ENCODE measurements at regions of chr6 and their contacts with region 1.

Region 1: DNA sequence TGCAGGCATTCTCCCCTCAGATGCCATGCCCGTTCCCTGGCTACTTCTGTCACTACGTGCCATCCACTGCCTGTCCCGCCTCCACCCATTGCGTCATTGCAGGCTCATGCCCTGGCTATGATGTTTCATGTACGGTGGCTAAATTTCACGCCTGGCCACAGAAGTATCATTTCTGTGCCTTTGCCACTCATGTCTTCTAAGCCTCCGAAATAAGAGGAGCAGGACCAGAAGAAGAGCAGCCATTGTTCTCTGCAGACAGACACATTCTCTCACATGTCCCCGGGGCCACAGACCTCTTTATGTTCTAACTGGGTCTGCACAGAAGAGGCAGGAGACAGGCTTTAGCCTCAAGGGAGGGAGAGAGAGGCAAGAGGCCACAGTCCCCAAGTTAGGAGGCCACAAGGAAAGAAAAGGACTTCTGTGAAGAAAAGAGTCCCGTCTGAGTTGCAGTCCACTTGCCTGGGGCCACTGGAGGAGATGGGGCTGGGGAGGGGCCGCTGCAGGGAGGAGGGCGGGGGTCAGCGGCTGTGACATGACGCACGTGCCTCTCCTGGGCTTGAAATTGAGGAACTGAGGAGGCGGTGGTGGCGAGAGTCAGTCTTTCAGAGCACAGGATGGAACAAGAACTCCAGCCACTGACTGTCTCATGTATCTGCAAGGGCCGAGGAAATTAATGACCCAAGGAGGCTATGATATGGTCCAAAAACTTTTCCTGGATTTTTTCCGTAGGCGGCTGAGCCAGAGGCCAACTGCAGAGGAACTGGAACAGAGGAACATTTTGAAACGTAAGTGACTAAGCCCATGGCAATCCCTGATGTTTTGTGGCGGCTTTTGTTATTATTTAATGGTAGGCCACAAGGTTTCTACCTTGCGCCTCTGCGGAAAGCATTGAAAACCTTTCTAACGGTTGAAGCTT is 55.9 kb downstream of the TBC1D7 start:
- DNase-seq: peak; percentile 91
- ATAC-seq: peak; percentile 76
- H3K4me3 ChIP-seq: peak overlapping the region; percentile 75 to 99 (median 96)
- H3K4me3 Mint-ChIP-seq: peak overlapping the region; percentile 94
- H3K27ac ChIP-seq: peak overlapping the region; percentile 94 to 96
- H3K27ac Mint-ChIP-seq: peak overlapping the region; percentile 93
- H3K4me1 ChIP-seq: peaks cover 59 to 71% of the 10 kb centered on the region in 2 donors
- H3K4me1 Mint-ChIP-seq: peaks cover 72% of the 10 kb centered on the region
- H3K27me3 ChIP-seq: no peaks in the 10 kb centered on the region
- H3K27me3 Mint-ChIP-seq: no peaks in the 10 kb centered on the region
- CTCF ChIP-seq: no peak

Region 2: GRCh38 chr6:13101409-13101808 is 171.0 kb before region 1 on chr6:
- CTCF ChIA-PET with region 1: no interaction called
- POLR2A ChIA-PET with region 1: no interaction called
- intact Hi-C with region 1: no loop called
- DNase-seq: no peak
- ATAC-seq: no peak
- H3K4me3 ChIP-seq: no peak overlapping the region
- H3K4me3 Mint-ChIP-seq: no peak overlapping the region
- H3K27ac ChIP-seq: no peak overlapping the region
- H3K27ac Mint-ChIP-seq: no peak overlapping the region
- H3K4me1 ChIP-seq: peaks cover 10 to 15% of the 10 kb centered on the region in 2 donors
- H3K4me1 Mint-ChIP-seq: no peaks in the 10 kb centered on the region
- H3K27me3 ChIP-seq: peaks cover 0 to 4% (median 0%) of the 10 kb centered on the region in 4 experiments
- H3K27me3 Mint-ChIP-seq: peaks cover 15% of the 10 kb centered on the region
- CTCF ChIP-seq: no peak

Region 3: DNA sequence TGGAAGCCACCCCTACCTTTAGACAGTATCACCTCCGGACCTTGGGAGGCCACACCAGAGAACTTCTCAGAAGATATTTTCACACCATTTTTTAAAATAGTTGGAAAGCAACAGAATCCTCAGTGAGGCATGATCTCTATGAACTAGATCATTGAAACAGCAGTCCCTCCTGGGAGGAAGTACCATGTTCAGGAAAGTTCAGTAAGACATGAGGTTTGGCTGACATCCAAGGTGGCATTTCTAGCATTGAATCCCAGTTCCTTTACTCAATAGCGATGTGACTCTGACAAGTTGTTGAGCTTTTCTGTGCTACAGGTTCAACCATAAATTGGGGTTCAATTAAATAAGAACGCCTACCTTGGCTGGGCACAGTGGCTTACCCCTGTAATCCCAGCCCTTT is 113.1 kb before region 1 on chr6:
- CTCF ChIA-PET with region 1: no interaction called
- POLR2A ChIA-PET with region 1: no interaction called
- intact Hi-C with region 1: no loop called
- DNase-seq: no peak
- ATAC-seq: no peak
- H3K4me3 ChIP-seq: no peak overlapping the region
- H3K4me3 Mint-ChIP-seq: no peak overlapping the region
- H3K27ac ChIP-seq: no peak overlapping the region
- H3K27ac Mint-ChIP-seq: no peak overlapping the region
- H3K4me1 ChIP-seq: peaks cover 0 to 3% of the 10 kb centered on the region in 2 donors
- H3K4me1 Mint-ChIP-seq: peaks cover 2% of the 10 kb centered on the region
- H3K27me3 ChIP-seq: peaks cover 0 to 5% (median 1%) of the 10 kb centered on the region in 4 experiments
- H3K27me3 Mint-ChIP-seq: peaks cover 19% of the 10 kb centered on the region
- CTCF ChIP-seq: no peak

Region 4: DNA sequence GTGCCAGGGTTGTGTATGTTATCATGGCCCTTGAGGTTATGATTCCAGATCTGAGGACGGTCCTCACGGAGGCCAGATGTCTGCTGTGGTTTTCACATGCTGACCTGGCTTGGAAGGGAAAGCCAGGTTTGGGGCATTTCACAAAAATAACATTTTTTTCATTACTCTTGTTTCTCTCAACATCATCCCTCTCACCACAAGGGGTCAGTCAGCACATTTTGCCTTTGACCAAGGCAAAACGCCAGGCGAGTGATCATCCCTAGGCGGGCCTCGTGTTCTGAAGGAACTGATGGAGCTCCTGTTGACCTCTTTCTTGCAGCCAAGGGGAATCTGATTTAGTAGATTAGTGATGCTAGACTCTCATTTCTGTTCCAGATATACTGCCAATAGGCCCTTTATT is 77.5 kb before region 1 on chr6:
- CTCF ChIA-PET with region 1: interaction called, 152 read pairs
- POLR2A ChIA-PET with region 1: interaction called, 8 read pairs
- intact Hi-C with region 1: loop called (anchors 1 kb)
- DNase-seq: peak; percentile 80
- ATAC-seq: peak; percentile 70
- H3K4me3 ChIP-seq: no peak overlapping the region
- H3K4me3 Mint-ChIP-seq: no peak overlapping the region
- H3K27ac ChIP-seq: no peak overlapping the region
- H3K27ac Mint-ChIP-seq: peak overlapping the region; percentile 70
- H3K4me1 ChIP-seq: peaks cover 7 to 14% of the 10 kb centered on the region in 2 donors
- H3K4me1 Mint-ChIP-seq: peaks cover 13% of the 10 kb centered on the region
- H3K27me3 ChIP-seq: no peaks in the 10 kb centered on the region
- H3K27me3 Mint-ChIP-seq: peaks cover 13% of the 10 kb centered on the region
- CTCF ChIP-seq: peak; percentile 73

Region 5: GRCh38 chr6:13261464-13261994 is 10.9 kb before region 1 on chr6:
- CTCF ChIA-PET with region 1: interaction called, 15 read pairs
- POLR2A ChIA-PET with region 1: interaction called, 6 read pairs
- intact Hi-C with region 1: loop called (anchors 1 kb)
- DNase-seq: peak; percentile 91
- ATAC-seq: peak; percentile 76
- H3K4me3 ChIP-seq: peak overlapping the region; percentile 25 to 55 (median 36)
- H3K4me3 Mint-ChIP-seq: peak overlapping the region; percentile 75
- H3K27ac ChIP-seq: peak overlapping the region; percentile 93
- H3K27ac Mint-ChIP-seq: peak overlapping the region; percentile 86
- H3K4me1 ChIP-seq: peaks cover 73 to 87% of the 10 kb centered on the region in 2 donors
- H3K4me1 Mint-ChIP-seq: peaks cover 89% of the 10 kb centered on the region
- H3K27me3 ChIP-seq: no peaks in the 10 kb centered on the region
- H3K27me3 Mint-ChIP-seq: no peaks in the 10 kb centered on the region
- CTCF ChIP-seq: no peak

Region 6: GRCh38 chr6:13296536-13296997 is 24.2 kb after region 1 on chr6:
- CTCF ChIA-PET with region 1: interaction called, 31 read pairs
- POLR2A ChIA-PET with region 1: interaction called, 3 read pairs
- intact Hi-C with region 1: loop called (anchors 1 kb)
- DNase-seq: peak; percentile 44
- ATAC-seq: peak; percentile 19
- H3K4me3 ChIP-seq: no peak overlapping the region
- H3K4me3 Mint-ChIP-seq: peak overlapping the region; percentile 53
- H3K27ac ChIP-seq: no peak overlapping the region
- H3K27ac Mint-ChIP-seq: peak overlapping the region; percentile 68
- H3K4me1 ChIP-seq: peaks cover 15 to 26% of the 10 kb centered on the region in 2 donors
- H3K4me1 Mint-ChIP-seq: peaks cover 70% of the 10 kb centered on the region
- H3K27me3 ChIP-seq: no peaks in the 10 kb centered on the region
- H3K27me3 Mint-ChIP-seq: no peaks in the 10 kb centered on the region
- CTCF ChIP-seq: peak; percentile 40

Region 7: GRCh38 chr6:13319891-13320564 is 47.6 kb after region 1 on chr6:
- CTCF ChIA-PET with region 1: no interaction called
- POLR2A ChIA-PET with region 1: no interaction called
- intact Hi-C with region 1: no loop called
- DNase-seq: no peak
- ATAC-seq: no peak
- H3K4me3 ChIP-seq: no peak overlapping the region
- H3K4me3 Mint-ChIP-seq: no peak overlapping the region
- H3K27ac ChIP-seq: no peak overlapping the region
- H3K27ac Mint-ChIP-seq: no peak overlapping the region
- H3K4me1 ChIP-seq: no peaks in the 10 kb centered on the region
- H3K4me1 Mint-ChIP-seq: no peaks in the 10 kb centered on the region
- H3K27me3 ChIP-seq: no peaks in the 10 kb centered on the region
- H3K27me3 Mint-ChIP-seq: no peaks in the 10 kb centered on the region
- CTCF ChIP-seq: no peak

Region 8: GRCh38 chr6:13349811-13350506 is 77.6 kb after region 1 on chr6:
- CTCF ChIA-PET with region 1: no interaction called
- POLR2A ChIA-PET with region 1: no interaction called
- intact Hi-C with region 1: no loop called
- DNase-seq: no peak
- ATAC-seq: no peak
- H3K4me3 ChIP-seq: no peak overlapping the region
- H3K4me3 Mint-ChIP-seq: no peak overlapping the region
- H3K27ac ChIP-seq: no peak overlapping the region
- H3K27ac Mint-ChIP-seq: no peak overlapping the region
- H3K4me1 ChIP-seq: peaks cover 20 to 25% of the 10 kb centered on the region in 2 donors
- H3K4me1 Mint-ChIP-seq: peaks cover 27% of the 10 kb centered on the region
- H3K27me3 ChIP-seq: no peaks in the 10 kb centered on the region
- H3K27me3 Mint-ChIP-seq: no peaks in the 10 kb centered on the region
- CTCF ChIP-seq: no peak

Region 9: DNA sequence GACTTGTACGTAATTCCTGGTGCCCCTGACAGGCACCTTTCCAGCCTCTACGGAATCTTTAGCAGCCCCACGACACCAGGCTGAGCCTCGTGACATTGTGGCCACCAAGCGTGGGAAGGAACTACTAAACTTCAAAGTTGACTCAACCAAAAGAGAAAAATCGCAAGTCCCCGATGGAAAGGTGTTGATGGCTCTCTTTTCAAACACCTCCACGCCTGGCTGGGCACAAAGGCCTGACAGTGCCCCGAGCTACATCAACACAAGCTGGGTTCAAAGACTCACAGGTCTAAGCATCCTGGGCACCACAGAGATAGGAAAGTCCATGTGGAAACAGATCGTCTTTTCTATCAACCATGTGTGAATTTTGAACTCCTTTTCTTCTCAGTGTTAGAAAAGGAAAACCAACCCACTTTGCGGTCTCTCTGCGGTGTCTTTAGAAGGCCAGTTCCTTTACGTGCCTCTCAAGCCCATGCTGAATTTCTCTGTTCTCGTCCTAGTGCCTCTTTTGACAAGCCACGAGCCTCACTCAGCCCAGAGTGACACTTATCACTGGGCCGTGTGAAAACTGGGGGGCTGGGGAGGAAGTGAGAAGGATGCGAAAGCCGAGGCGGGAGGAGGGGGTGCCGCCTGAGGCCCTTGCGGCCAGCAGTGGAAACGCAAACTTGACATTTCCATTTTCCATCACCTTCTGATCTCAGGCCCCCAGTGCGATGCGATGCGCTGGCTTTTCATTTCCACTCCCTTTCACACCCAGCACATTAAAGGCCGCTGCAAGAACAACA is 155.6 kb after region 1 on chr6:
- CTCF ChIA-PET with region 1: interaction called, 3 read pairs
- POLR2A ChIA-PET with region 1: no interaction called
- intact Hi-C with region 1: loop called (anchors 5 kb)
- DNase-seq: peak; percentile 91
- ATAC-seq: peak; percentile 85
- H3K4me3 ChIP-seq: peak overlapping the region in 4 of 5 experiments; percentile 7 to 46 (median 26)
- H3K4me3 Mint-ChIP-seq: peak overlapping the region; percentile 82
- H3K27ac ChIP-seq: peak overlapping the region; percentile 83 to 86
- H3K27ac Mint-ChIP-seq: peak overlapping the region; percentile 95
- H3K4me1 ChIP-seq: peaks cover 41 to 75% of the 10 kb centered on the region in 2 donors
- H3K4me1 Mint-ChIP-seq: peaks cover 67% of the 10 kb centered on the region
- H3K27me3 ChIP-seq: no peaks in the 10 kb centered on the region
- H3K27me3 Mint-ChIP-seq: no peaks in the 10 kb centered on the region
- CTCF ChIP-seq: peak; percentile 66

Region 10: DNA sequence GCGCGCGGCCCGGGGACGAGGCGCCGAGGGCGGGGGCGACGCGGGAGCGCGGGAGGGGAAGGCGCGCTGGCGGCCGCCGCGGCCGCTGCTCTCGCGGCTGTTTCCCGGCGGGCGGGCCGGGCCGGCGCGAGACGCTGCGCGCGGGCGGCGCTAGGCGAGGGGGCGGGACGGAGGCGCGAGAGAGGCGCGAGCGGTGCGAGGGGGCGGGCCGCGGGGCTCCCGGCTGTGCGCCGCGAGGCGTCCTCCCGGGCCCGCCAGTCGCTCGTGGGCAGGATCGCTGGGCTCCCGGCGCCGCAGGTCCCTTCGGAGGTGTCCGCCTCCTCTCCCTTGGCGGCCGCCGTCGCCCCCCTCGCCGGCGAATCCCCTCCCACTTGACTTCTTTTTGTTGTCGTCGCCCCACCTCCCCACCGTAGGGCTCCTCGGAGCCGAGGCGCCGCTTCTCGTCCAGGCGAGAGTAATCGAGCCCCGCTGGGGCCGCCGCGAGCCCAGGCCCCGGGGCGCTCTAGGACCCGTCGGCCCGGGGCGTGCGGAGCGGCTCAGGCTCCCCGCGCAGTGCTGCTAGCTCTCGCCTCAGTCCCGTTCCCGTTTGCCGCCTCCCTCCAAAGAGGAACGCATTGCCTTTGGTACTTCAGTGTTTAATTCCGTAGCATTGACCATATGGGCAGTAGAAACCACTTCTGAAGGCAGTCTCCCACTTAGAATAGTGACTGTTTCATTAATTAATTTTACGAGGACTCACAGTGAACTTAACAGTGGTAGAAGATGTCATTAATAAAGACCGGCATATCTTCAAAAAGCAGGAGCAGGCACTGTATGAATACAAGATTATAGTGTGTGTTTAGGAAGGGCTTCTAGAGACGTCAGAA is 439.6 kb after region 1 on chr6 and contains the start of gene RANBP9:
- CTCF ChIA-PET with region 1: no interaction called
- POLR2A ChIA-PET with region 1: interaction called, 6 read pairs
- intact Hi-C with region 1: loop called (anchors 5 kb)
- DNase-seq: peak; percentile 94
- ATAC-seq: peak; percentile 82
- H3K4me3 ChIP-seq: peak within 1 kb of the TSS; percentile 58 to 88 (median 78)
- H3K4me3 Mint-ChIP-seq: peak within 1 kb of the TSS; percentile 96
- H3K27ac ChIP-seq: peak within 1 kb of the TSS; percentile 80 to 84
- H3K27ac Mint-ChIP-seq: peak within 1 kb of the TSS; percentile 96
- H3K4me1 ChIP-seq: peaks cover 29 to 33% of the 10 kb centered on the region in 2 donors
- H3K4me1 Mint-ChIP-seq: peaks cover 41% of the 10 kb centered on the region
- H3K27me3 ChIP-seq: no peaks in the 10 kb centered on the region
- H3K27me3 Mint-ChIP-seq: no peaks in the 10 kb centered on the region
- CTCF ChIP-seq: no peak
- total RNA-seq, gene RANBP9: 34.1 and 39.0 TPM in 2 replicates